ENCODE measurements at regions of chr6 and their contacts with region 1.

Region 1: DNA sequence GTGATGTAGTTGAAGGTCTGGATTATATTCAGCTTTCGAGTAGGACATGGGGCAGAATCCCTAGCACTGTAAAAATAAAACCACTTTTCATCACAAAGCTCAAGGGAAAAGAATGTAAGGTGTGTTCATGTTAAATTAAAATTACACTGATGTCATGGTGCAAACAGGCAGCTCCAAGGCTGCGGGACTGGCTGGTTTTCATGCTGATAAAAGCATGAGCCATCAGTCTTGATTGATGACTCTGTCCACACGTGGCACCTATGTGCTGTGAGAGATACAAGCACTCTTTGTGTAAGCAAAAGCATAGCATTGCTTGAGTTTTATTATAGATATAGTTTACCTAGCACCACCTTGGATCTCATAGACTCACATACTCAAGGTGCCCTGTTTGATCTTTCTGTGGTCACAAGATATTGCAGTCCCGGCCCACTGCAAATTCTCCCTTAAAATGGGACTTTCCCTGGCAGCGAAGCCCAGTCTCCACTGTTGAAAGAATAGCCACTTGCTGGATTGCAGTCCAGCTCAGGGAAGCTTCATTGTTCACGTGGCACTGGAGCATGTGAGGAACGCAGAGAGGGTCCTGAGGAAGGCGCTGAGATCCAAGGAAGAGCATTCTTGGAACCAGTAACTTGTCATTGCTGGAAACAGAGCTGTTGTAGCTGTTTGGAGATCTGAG is 90.6 kb downstream of the TIAM2 start:
- DNase-seq: peak; percentile 76
- H3K4me3 Mint-ChIP-seq: peak overlapping the region; percentile 40
- H3K27ac Mint-ChIP-seq: peak overlapping the region; percentile 66
- H3K4me1 Mint-ChIP-seq: peaks cover 31% of the 10 kb centered on the region
- H3K27me3 Mint-ChIP-seq: no peaks in the 10 kb centered on the region
- CTCF ChIP-seq: no peak

Region 2: DNA sequence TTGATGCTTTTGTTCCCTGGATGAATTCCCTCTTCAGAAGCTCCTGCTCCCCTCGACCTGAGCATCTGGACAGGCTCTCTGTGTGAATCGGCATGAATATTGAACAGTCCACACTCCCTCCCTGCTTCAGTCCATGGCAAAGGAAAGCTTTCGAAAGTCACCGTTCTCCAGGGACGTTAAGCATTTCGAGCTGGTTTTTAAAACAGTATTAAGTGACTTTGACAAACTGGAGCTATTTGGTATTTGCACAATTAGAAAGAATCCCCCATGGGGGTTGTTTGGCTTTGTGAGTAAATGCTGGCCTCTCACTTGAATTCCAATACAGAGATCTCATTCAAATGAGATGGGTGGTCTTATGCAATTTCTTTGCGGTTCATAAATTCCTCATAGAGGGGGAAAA is 175.9 kb before region 1 on chr6:
- CTCF ChIA-PET with region 1: no interaction called
- intact Hi-C with region 1: no loop called
- DNase-seq: no peak
- H3K4me3 Mint-ChIP-seq: no peak overlapping the region
- H3K27ac Mint-ChIP-seq: no peak overlapping the region
- H3K4me1 Mint-ChIP-seq: no peaks in the 10 kb centered on the region
- H3K27me3 Mint-ChIP-seq: no peaks in the 10 kb centered on the region
- CTCF ChIP-seq: no peak

Region 3: DNA sequence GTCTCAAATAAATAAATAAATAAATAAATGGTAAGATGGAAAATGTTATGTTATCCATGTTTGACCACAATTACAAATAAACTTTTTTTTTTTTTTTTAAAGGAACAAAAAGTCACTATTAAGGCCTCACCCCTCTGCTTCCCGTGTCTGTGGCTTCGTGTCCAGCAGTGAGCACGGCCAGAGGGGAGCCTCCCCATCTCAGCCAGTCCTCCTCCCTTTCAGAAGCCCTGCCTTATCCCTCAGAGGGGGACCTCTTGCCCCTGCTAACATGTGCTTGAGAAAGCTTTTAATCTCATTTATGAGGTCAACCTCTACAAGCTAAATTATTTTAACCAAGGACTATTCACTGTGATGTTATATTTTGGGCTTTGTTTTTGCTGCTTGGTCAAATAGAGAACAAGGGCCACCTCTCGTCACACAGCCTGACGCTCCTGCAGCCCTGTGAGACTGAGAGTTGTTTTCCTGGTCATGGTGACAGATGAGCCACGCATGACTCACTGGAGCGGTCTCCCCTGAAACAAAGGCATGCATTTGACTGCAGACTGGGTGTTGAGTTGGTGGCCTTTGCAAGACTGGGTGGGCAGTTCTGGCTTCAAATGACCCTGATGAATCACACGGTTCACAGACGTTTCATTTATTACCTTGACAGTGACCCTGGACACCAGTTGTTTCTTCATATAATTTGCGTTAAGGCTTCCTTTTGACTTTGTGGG is 41.2 kb after region 1 on chr6:
- CTCF ChIA-PET with region 1: interaction called, 5 read pairs
- intact Hi-C with region 1: loop called (anchors 2 kb)
- DNase-seq: peak; percentile 80
- H3K4me3 Mint-ChIP-seq: peak overlapping the region; percentile 50
- H3K27ac Mint-ChIP-seq: peak overlapping the region; percentile 97
- H3K4me1 Mint-ChIP-seq: peaks cover 37% of the 10 kb centered on the region
- H3K27me3 Mint-ChIP-seq: no peaks in the 10 kb centered on the region
- CTCF ChIP-seq: no peak

Region 4: DNA sequence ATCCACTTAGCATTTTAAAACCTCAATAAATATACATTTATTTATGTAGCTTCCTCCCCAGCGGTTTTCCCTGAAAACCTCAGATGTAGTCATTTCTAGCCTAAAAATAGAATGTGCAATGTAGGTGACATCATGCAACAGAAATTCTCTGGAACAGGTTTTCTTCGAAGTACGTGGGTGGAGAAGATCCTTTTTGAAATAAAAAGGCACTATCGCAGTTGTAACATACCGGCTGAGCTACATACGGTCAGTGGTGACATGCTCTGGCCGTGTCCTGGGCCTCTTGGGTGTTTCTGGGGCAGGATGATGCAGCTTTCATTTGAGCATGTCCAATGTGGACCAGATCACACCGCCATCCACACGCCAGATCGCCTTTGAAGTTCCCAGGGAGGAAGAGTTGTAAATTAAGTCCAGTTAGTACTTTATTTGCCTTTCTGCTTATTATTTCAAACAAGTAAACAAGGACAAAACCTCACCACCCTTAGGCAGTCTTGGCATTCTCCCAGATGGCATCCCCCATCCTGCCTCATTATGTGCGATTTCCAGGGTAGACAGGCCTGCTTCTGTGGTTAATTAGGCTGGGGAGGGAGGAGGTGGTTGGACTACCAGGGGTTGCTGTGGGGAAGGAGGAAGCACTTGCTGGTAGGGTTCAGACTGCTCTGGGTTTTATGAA is 68.6 kb after region 1 on chr6:
- CTCF ChIA-PET with region 1: no interaction called
- intact Hi-C with region 1: loop called (anchors 5 kb)
- DNase-seq: no peak
- H3K4me3 Mint-ChIP-seq: no peak overlapping the region
- H3K27ac Mint-ChIP-seq: no peak overlapping the region
- H3K4me1 Mint-ChIP-seq: peaks cover 37% of the 10 kb centered on the region
- H3K27me3 Mint-ChIP-seq: no peaks in the 10 kb centered on the region
- CTCF ChIP-seq: no peak